ENCODE measurements at regions of chr19 and their contacts with region 1.

Region 1: GRCh38 chr19:18322759-18323460 is at the start of gene LSM4:
- DNase-seq: peak; percentile 99
- H3K4me3 ChIP-seq: peak within 1 kb of the TSS; percentile 76 to 84
- H3K27ac ChIP-seq: peak within 1 kb of the TSS; percentile 85 to 94
- H3K4me1 ChIP-seq: peaks cover 24% of the 10 kb centered on the region
- H3K27me3 ChIP-seq: no peaks in the 10 kb centered on the region
- CTCF ChIP-seq: peak in 1 of 3 experiments; percentile 35
- POLR2A ChIP-seq: peak; percentile 29
- total RNA-seq, gene LSM4: 212 to 241 TPM

Region 2: DNA sequence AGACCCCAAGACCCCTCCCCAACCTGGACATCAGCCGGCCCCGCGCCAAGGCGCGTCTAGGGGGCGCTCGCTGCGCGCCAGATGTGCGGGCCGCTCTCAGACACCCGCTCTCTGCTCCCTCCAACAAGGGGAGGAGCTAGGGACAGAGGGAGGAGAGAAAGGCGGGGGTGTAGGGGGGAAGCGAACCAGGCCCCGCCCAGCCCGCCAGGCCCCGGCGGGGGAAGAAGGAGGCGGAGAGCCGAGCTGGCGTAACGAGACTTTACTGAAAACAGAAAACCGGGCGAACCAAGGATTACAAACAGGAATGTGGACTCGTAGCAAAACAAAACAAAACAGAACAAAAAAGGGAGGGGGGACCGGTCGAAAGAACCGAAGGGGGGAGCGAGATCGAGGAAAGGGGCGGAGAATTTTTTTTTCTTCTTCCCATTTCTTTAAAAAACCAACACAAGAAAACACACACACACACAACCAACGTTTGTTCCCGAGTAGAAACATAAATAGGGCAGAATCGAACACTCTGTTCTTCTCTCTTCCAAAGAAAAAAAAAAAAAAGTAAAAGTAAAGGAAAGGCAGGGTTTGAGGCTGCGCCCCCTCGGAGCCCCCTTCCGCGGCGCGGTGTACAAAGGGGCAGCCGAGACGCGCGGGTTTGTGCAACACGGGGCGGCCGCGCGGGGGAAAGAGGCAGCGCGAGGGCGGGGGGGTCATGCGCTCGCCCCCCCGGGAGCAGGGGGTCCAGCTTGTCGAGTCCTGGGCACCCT is 43.2 kb before region 1 on chr19:
- intact Hi-C with region 1: loop called (anchors 5 kb)
- DNase-seq: peak; percentile 94
- H3K4me3 ChIP-seq: peak overlapping the region; percentile 92 to 95
- H3K27ac ChIP-seq: peak overlapping the region; percentile 99 to 100
- H3K4me1 ChIP-seq: peaks cover 32% of the 10 kb centered on the region
- H3K27me3 ChIP-seq: no peaks in the 10 kb centered on the region
- CTCF ChIP-seq: peak; percentile 87 to 95 (median 90)
- POLR2A ChIP-seq: peak; percentile 95

Region 3: DNA sequence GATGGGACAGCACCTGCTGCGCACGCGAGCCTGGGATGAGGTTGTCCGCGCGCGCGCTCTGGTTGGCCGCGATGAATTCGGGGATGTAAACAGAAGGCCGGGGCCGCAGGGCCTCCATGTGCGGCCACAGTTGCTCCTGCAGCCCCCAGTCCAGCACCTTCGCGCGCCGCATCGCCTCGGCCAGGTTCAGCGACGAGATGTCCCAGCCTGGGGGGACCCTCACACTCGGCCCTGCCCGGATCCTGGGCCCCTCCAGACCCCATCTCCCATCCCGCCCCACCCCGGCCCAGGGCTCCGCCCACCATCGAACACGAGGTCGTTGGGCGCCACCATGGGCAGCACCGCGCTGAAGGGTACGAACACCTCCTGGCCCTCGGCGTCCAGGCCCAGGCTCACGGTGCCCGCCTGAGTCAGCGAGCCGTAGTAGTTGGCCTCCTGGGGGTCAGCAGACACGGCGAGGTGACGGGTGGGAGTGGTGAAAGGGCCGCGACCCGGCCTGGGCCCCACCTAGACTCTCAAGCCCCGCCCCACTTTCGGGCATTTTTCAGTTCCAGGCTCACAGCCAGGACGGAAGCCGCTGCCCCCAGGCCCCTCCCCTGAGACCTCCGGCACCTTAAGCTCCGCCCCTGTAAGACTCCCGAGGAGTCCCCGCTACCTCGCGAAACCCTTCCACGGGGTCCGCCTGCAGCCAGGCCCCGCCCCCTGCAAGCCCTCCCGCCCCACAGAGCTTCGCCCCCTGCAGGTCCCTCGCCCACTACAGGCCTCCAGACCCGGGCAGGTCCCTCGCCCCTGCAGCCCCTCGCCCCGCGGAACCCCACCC is 114.0 kb after region 1 on chr19:
- intact Hi-C with region 1: no loop called
- DNase-seq: peak; percentile 92
- H3K4me3 ChIP-seq: peak overlapping the region; percentile 74 to 91
- H3K27ac ChIP-seq: peak overlapping the region; percentile 71 to 88
- H3K4me1 ChIP-seq: peaks cover 55% of the 10 kb centered on the region
- H3K27me3 ChIP-seq: no peaks in the 10 kb centered on the region
- CTCF ChIP-seq: no peak
- POLR2A ChIP-seq: no peak

Measured in testis (tissue), 5 donors.